Activated T-helper 2 cell treated with anti-CD3 and anti-CD28 coated beads, Interferon-gamma antibody, Interleukin-2, Interleukin-4, amounts not matched to agents 10 μg/mL and 5 μg/mL and 100 μg/mL, durations not matched to agents 14 hours and 24 hours and 36 hours (primary cell): ENCODE measurements at regions of chrX and their contacts with region 1.

Region 1: DNA sequence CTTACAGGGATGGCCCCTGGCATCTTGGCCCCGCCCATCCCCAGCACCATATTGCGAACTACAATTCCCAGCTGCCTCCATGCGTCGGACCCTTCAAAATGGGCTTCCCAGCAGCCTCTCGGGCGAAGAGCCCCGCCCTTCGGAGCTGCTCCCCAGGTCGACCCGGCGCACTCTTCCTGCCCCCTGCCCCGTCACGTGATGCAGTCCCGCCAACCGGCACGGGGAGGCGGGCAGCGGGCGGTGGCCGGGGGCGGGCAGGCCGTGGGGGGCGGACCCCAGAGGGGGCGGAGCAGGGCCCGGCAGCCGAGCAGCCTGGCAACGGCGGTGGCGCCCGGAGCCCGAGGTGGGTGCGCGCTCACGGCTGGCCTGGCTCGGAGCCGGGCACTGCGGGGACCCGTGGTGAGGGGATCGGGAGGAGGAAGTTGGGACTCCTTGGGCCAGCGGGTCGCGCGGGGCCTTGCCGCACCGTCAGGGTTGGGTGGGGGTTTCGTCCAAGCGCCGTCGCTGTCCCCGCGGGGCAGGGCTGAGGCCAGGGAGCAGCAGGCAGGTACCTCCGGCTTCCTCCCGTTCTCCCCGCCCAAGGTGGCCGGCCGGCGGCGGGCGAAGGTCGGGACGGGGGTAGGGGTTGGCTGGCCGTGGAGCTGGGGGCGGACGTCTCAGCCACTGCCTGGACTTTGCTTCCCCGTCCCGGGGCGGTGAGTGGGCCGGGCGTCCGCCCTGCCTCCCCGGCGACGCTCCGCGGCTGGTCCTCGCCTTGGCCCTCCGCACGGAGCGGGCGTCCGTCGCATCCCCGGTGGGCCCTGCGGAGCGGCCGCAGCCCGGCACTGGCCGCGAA is at the start of gene MTM1:
- DNase-seq: peak; percentile 89
- H3K4me3 Mint-ChIP-seq: peak within 1 kb of the TSS; percentile 82
- H3K27ac Mint-ChIP-seq: peak within 1 kb of the TSS; percentile 94
- H3K4me1 Mint-ChIP-seq: peaks cover 35% of the 10 kb centered on the region
- H3K27me3 Mint-ChIP-seq: no peaks in the 10 kb centered on the region
- total RNA-seq, gene MTM1: 25.2 and 26.5 TPM in 2 replicates

Region 2: GRCh38 chrX:150547375-150548115 is 21.0 kb before region 1 on chrX:
- intact Hi-C with region 1: loop called (anchors 2 kb)
- DNase-seq: no peak
- H3K4me3 Mint-ChIP-seq: peak overlapping the region; percentile 42
- H3K27ac Mint-ChIP-seq: peak overlapping the region; percentile 60
- H3K4me1 Mint-ChIP-seq: peaks cover 26% of the 10 kb centered on the region
- H3K27me3 Mint-ChIP-seq: no peaks in the 10 kb centered on the region